IMR-90 (cell line): ENCODE measurements at regions of chr3 and their contacts with region 1.

Region 1: DNA sequence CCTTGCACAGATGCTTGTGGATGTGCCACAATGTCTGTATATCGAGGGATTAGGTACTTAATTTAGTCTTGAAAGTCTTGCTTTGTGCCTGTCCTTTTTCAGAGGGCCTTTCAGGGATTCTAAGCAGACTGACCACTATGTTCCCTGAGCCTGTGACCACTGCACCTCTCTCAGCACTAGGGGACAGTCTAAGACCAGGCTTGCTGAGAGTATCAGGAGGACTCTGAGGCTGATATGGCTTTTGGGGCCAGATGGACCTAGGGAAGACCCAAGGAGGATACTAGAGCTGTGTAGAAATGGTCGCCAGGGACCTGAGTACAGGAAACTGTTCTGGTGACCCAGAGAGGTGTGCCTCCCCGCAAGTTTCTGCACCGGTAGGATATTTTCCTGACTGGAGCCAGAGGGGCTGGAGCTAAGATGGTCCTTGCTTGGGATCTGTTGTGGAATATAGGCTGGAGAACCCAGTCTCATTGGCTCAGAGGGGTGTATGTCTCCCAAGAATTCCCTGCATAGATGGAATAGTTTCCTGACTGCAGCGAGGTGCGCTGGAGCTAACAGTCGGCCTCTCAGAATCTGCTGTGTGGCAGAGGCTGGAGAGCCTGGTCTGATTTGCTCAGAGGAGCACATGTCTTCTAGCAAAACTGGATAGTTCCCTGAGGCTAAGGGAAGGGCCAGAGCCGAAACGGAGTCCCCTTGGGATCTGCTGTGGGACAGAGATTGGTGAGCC is 213.2 kb upstream of the DCBLD2 start:
- DNase-seq: peak; percentile 69
- ATAC-seq: peak; percentile 95
- H3K4me3 ChIP-seq: no peak overlapping the region
- H3K27ac ChIP-seq: no peak overlapping the region
- H3K4me1 ChIP-seq: peaks cover 4% of the 10 kb centered on the region; the same call in 1 of the 2 replicates
- H3K27me3 ChIP-seq: no peaks in the 10 kb centered on the region
- CTCF ChIP-seq: peak; percentile 93
- POLR2A ChIP-seq: peak; percentile 57; the same call in 1 of the 2 replicates
- RAD21 ChIP-seq: peak; percentile 99

Region 2: DNA sequence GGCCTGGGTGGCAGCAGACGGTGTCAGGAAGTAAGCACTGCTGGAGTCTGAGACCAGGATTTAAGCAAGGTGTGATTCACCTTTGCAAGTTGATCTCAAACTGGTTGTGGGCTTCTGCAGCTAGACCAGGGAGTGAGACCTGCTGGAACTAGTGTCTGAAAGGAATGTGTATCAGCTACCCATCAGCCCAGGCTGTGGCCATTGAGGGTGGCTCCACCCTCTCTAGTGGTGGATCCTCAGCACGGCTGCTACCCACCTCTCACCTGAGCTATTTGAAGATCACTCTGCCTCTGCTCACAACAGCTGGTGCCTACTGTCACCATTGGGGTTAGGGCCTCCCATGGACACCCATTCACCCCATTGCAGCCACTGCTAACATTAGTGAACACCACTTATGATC is 73.0 kb before region 1 on chr3:
- CTCF ChIA-PET with region 1: no interaction called
- POLR2A ChIA-PET with region 1: no interaction called
- dilution Hi-C with region 1: no loop called
- in situ Hi-C with region 1: no loop called
- intact Hi-C with region 1: no loop called
- DNase-seq: no peak
- ATAC-seq: no peak
- H3K4me3 ChIP-seq: no peak overlapping the region
- H3K27ac ChIP-seq: no peak overlapping the region
- H3K4me1 ChIP-seq: no peaks in the 10 kb centered on the region
- H3K27me3 ChIP-seq: no peaks in the 10 kb centered on the region; the same call in 1 of the 2 replicates
- CTCF ChIP-seq: no peak
- POLR2A ChIP-seq: no peak
- RAD21 ChIP-seq: no peak

Region 3: GRCh38 chr3:99172736-99173657 is 58.3 kb after region 1 on chr3:
- CTCF ChIA-PET with region 1: interaction called, 6 read pairs
- POLR2A ChIA-PET with region 1: no interaction called
- dilution Hi-C with region 1: no loop called
- in situ Hi-C with region 1: no loop called
- intact Hi-C with region 1: loop called (anchors 1 kb)
- DNase-seq: peak; percentile 80
- ATAC-seq: peak; percentile 82
- H3K4me3 ChIP-seq: no peak overlapping the region
- H3K27ac ChIP-seq: no peak overlapping the region
- H3K4me1 ChIP-seq: no peaks in the 10 kb centered on the region
- H3K27me3 ChIP-seq: no peaks in the 10 kb centered on the region
- CTCF ChIP-seq: peak; percentile 86
- POLR2A ChIP-seq: no peak
- RAD21 ChIP-seq: peak; percentile 87

Region 4: GRCh38 chr3:99499235-99500158 is 384.8 kb after region 1 on chr3:
- CTCF ChIA-PET with region 1: interaction called, 3 read pairs
- POLR2A ChIA-PET with region 1: no interaction called
- dilution Hi-C with region 1: no loop called
- in situ Hi-C with region 1: no loop called
- intact Hi-C with region 1: loop called (anchors 5 kb)
- DNase-seq: peak; percentile 73
- ATAC-seq: peak; percentile 65
- H3K4me3 ChIP-seq: no peak overlapping the region
- H3K27ac ChIP-seq: no peak overlapping the region
- H3K4me1 ChIP-seq: peaks cover 7% of the 10 kb centered on the region
- H3K27me3 ChIP-seq: no peaks in the 10 kb centered on the region
- CTCF ChIP-seq: peak; percentile 87
- POLR2A ChIP-seq: no peak
- RAD21 ChIP-seq: peak; percentile 79

Region 5: DNA sequence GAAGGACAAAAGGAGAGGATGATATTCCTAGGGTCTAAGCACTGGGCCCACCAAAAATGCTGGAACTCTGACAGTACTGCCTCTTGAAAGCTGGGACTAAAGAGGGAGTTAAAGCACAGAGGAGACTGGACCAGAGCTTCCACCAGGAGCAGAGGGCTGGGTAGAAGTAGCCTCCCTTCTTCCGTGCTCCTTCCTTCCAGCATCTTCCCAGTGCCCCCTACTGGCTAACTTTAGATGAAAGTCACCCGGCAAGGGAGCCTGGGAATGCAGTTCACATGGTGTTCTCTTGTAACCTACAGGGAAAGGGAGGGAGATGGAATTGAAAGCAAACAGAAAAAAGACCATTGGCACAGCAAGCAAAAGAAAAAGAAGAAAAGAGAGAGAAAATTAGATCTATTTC is 417.5 kb after region 1 on chr3:
- CTCF ChIA-PET with region 1: no interaction called
- POLR2A ChIA-PET with region 1: no interaction called
- dilution Hi-C with region 1: no loop called
- in situ Hi-C with region 1: no loop called
- intact Hi-C with region 1: loop called (anchors 1 kb)
- DNase-seq: peak; percentile 77
- ATAC-seq: peak; percentile 64
- H3K4me3 ChIP-seq: no peak overlapping the region
- H3K27ac ChIP-seq: no peak overlapping the region
- H3K4me1 ChIP-seq: peaks cover 13% of the 10 kb centered on the region
- H3K27me3 ChIP-seq: no peaks in the 10 kb centered on the region
- CTCF ChIP-seq: peak; percentile 69
- POLR2A ChIP-seq: no peak
- RAD21 ChIP-seq: peak; percentile 75

Region 6: DNA sequence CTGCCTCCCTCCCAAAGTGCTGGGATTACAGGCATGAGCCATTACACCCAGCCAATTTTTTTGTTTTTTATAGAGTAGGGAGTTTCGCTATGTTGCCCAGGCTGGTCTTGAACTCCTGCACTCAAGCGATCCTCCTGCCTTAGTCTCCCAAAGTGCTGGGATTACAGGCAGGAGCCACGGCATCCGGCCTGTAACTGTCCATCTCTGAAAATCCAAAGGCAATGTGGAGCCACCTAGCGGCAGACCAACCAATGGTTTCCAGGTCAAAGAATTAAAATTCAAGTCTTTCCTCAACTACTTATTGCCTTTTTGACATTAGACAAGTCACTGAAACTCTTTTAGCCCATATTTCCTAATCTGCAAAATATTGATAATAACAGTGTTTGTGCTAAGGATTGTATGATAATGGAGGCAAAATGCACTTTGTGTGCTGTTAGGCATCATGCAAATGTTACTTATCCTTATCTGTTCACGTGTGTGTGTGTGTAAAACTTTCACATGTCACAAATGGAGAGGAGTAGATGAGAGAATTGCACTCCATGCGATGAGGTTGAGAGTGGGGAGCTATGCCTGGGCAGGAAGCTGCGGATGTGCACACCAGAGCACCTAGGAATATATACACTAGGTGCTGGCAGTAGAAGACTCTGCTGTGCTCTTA is 572.4 kb after region 1 on chr3:
- CTCF ChIA-PET with region 1: no interaction called
- POLR2A ChIA-PET with region 1: no interaction called
- dilution Hi-C with region 1: no loop called
- in situ Hi-C with region 1: no loop called
- intact Hi-C with region 1: loop called (anchors 1 kb)
- DNase-seq: peak; percentile 74
- ATAC-seq: peak; percentile 72
- H3K4me3 ChIP-seq: no peak overlapping the region
- H3K27ac ChIP-seq: no peak overlapping the region
- H3K4me1 ChIP-seq: peaks cover 3% of the 10 kb centered on the region; the same call in 1 of the 2 replicates
- H3K27me3 ChIP-seq: no peaks in the 10 kb centered on the region
- CTCF ChIP-seq: peak; percentile 74
- POLR2A ChIP-seq: no peak
- RAD21 ChIP-seq: peak; percentile 79

Region 7: DNA sequence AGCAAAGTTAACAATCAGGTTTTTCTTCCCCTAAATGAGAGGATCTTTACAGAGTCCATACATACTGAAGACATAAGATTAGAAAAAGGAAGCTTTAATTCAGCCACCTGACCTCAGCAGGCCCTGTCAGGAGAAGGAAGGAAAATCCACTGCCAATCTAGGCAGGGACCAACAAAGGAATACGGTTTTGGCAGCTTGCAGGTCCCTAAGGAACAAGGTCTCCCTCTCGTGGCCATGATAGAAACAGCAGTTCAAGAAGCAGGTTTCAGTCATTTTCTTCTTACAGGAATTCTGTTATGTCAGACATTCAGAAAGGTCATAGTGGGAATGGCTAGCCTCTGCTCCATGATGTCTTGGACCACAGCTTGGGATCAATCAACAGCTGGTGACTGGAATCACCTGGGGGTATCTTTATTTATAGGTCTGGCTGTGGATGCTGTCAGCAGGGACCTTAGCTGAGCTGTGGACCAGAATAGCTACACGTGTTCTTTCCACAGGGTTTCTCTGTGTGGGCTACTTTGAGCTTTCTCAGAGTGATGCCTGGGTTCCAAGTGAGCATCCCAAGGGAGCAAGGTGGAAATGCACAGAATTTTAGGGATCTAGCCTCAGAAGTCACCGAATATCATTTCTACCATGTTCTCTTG is 693.5 kb after region 1 on chr3:
- CTCF ChIA-PET with region 1: interaction called, 4 read pairs
- POLR2A ChIA-PET with region 1: no interaction called
- dilution Hi-C with region 1: no loop called
- in situ Hi-C with region 1: no loop called
- intact Hi-C with region 1: loop called (anchors 1 kb)
- DNase-seq: peak; percentile 84
- ATAC-seq: peak; percentile 90
- H3K4me3 ChIP-seq: no peak overlapping the region
- H3K27ac ChIP-seq: no peak overlapping the region
- H3K4me1 ChIP-seq: no peaks in the 10 kb centered on the region
- H3K27me3 ChIP-seq: no peaks in the 10 kb centered on the region
- CTCF ChIP-seq: peak; percentile 80
- POLR2A ChIP-seq: no peak
- RAD21 ChIP-seq: peak; percentile 79